ENCODE measurements at regions of chr19 and their contacts with region 1.

Region 1: DNA sequence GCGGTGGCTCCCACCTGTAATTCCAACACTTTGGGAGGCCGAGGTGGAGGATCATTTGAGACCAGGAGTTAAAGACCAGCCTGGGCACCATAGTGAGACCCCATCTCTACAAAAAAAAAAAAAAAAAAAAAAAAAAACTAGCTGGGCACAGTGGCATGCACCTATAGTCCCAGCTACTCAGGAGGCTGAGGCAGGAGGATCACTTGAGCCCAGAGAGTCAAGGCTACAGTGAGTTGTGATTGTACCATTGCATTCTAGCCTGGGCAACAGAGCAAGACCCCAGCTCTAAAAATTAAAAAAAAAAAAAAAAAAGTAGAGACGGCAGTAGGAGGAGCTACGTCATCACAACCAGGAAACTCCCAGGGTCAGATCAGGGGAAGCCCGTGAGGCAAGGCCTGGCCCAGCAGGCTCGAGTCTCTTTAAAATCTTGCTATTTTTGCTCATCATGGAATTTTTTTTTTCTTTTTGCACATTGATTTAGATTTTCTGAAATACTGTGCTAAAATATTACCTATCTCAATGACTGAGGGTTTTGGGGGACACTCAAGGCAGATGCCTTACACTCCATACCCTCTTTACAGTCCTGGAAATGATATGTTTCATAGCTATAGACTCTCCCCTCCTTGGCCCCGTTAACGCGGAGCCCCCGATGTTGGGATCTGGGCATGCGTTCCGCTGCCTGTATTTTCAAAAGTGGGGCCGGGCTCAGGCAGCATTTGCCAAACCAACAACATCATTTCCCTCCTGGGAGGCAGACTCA is 44.4 kb upstream of the USE1 start:
- DNase-seq: peak; percentile 35
- H3K4me3 ChIP-seq: no peak overlapping the region
- H3K27ac ChIP-seq: no peak overlapping the region
- H3K4me1 ChIP-seq: no peaks in the 10 kb centered on the region
- CTCF ChIP-seq: no peak

Region 2: GRCh38 chr19:17052439-17053210 is 118.1 kb before region 1 on chr19:
- CTCF ChIA-PET with region 1: no interaction called
- POLR2A ChIA-PET with region 1: no interaction called
- intact Hi-C with region 1: no loop called
- DNase-seq: peak; percentile 44
- H3K4me3 ChIP-seq: no peak overlapping the region
- H3K27ac ChIP-seq: no peak overlapping the region
- H3K4me1 ChIP-seq: no peaks in the 10 kb centered on the region
- CTCF ChIP-seq: peak; percentile 73

Region 3: GRCh38 chr19:17209126-17210036 is 38.7 kb after region 1 on chr19:
- CTCF ChIA-PET with region 1: no interaction called
- POLR2A ChIA-PET with region 1: no interaction called
- intact Hi-C with region 1: loop called (anchors 1 kb)
- DNase-seq: peak; percentile 93
- H3K4me3 ChIP-seq: no peak overlapping the region
- H3K27ac ChIP-seq: peak overlapping the region; percentile 20
- H3K4me1 ChIP-seq: peaks cover 29% of the 10 kb centered on the region
- CTCF ChIP-seq: no peak

Measured in OCI-LY7 (cell line).